ENCODE measurements at regions of chr17 and their contacts with region 1.

Region 1: DNA sequence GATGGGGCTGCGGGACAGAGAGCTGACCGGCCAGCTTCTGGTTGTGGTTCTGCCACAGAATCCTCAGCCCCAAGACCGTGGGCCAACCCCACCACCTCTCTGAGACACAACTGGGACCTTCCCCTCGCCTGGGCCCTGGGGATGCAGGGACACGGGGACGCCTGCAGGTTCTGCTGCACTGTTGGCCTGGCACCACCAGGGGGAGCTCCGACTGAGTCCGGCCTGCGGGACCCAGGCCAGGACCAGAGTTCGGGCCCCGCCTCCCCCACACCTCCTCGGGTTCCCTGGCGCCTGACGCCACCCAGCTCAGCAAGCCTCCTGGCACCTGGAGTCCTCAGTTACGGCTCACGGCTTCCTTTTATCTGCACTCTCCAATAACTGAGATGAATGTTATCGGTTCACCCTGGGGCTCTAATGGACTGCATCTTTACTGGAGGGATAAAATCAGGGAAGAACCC is 27.3 kb downstream of the TBC1D16 start:
- DNase-seq: peak; percentile 98
- H3K4me3 ChIP-seq: no peak overlapping the region; a peak in 1 of 4 replicates
- H3K27ac ChIP-seq: no peak overlapping the region
- H3K4me1 ChIP-seq: peaks cover 0 to 5% of the 10 kb centered on the region in 2 experiments; a peak in 1 of 4 replicates
- H3K27me3 ChIP-seq: no peaks in the 10 kb centered on the region
- CTCF ChIP-seq: peak; percentile 98
- EP300 ChIP-seq: no peak
- RAD21 ChIP-seq: peak; percentile 66

Region 2: GRCh38 chr17:79810130-79811010 is 198.0 kb before region 1 on chr17:
- CTCF ChIA-PET with region 1: interaction called, 20 read pairs
- POLR2A ChIA-PET with region 1: no interaction called
- DNase-seq: peak; percentile 97
- H3K4me3 ChIP-seq: peak overlapping the region; percentile 51 to 64
- H3K27ac ChIP-seq: peak overlapping the region in 1 of 2 experiments; percentile 90; a peak in 2 of 4 replicates
- H3K4me1 ChIP-seq: peaks cover 15 to 41% of the 10 kb centered on the region in 2 experiments
- H3K27me3 ChIP-seq: peaks cover 43% of the 10 kb centered on the region
- CTCF ChIP-seq: no peak
- EP300 ChIP-seq: no peak; a peak in 1 of 4 replicates
- RAD21 ChIP-seq: no peak

Region 3: DNA sequence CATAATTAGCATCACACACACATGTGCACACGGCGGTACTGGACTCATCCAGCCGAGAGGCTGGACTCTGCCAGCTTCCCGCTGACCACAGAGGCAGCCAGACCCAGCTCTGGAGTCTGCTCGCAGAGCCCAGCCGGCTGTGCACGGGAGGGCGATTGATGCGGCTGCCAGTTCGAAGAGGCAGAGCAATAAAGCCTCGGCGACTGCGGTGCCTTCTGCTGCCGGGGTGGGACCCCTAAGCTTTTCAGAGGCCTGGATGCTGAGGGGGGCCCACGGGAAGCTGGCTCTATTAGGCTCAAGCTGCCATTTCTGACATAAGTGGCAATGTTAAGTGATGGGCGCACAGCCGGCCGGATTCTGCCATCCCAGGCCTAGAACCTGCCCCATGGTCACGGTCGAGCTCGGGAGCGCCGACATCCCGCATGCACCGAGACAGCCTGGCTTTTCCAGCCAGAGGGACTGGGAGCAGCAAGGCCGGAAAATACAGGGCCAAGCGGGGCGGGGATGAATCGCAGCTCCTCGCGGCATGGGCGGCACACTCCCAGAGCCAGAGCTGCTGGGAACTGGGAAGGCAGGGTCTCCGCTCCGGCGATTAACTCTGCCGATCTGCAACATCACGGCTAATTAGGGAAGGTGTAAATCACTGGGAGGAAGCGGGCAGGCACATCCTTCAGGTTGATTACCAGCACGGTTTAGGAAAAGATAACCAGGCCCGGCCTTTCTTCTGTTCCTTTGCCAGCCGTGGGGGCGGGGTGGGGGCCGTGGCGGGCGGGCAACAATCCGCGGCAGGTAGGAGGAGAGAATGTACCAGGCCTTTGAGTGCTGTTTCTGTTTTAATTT is 30.5 kb before region 1 on chr17:
- CTCF ChIA-PET with region 1: interaction called, 22 read pairs
- POLR2A ChIA-PET with region 1: no interaction called
- DNase-seq: peak; percentile 26
- H3K4me3 ChIP-seq: no peak overlapping the region
- H3K27ac ChIP-seq: no peak overlapping the region
- H3K4me1 ChIP-seq: peaks cover 0 to 20% of the 10 kb centered on the region in 2 experiments; a peak in 1 of 4 replicates
- H3K27me3 ChIP-seq: no peaks in the 10 kb centered on the region
- CTCF ChIP-seq: no peak
- EP300 ChIP-seq: no peak
- RAD21 ChIP-seq: no peak

Region 4: GRCh38 chr17:80023481-80024205 is 15.2 kb after region 1 on chr17:
- CTCF ChIA-PET with region 1: interaction called, 72 read pairs
- POLR2A ChIA-PET with region 1: no interaction called
- DNase-seq: peak; percentile 61
- H3K4me3 ChIP-seq: no peak overlapping the region
- H3K27ac ChIP-seq: no peak overlapping the region
- H3K4me1 ChIP-seq: peaks cover 0 to 2% of the 10 kb centered on the region in 2 experiments; a peak in 1 of 4 replicates
- H3K27me3 ChIP-seq: no peaks in the 10 kb centered on the region
- CTCF ChIP-seq: no peak
- EP300 ChIP-seq: no peak
- RAD21 ChIP-seq: no peak

Region 5: DNA sequence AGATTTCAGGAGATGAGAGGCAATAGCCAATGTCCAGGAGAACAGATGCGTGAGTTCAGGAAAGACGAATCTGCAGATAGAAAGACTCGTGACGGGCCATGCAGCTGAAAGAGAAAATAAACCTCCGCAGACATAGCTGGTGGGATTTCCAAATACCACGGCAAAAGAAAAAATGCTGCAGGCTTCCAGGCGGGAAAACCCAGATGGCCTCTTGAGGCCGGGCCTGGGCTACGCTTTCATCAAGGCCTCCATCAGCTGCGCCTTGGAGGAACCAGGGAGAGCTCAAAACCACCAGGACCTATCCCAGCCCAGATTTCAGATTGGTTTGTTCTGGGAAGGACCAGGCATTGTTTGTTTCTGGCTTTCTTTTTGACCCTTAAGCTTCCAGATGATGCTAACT is 44.7 kb after region 1 on chr17:
- CTCF ChIA-PET with region 1: interaction called, 28 read pairs
- POLR2A ChIA-PET with region 1: no interaction called
- DNase-seq: peak; percentile 54
- H3K4me3 ChIP-seq: no peak overlapping the region
- H3K27ac ChIP-seq: no peak overlapping the region
- H3K4me1 ChIP-seq: no peaks in the 10 kb centered on the region
- H3K27me3 ChIP-seq: no peaks in the 10 kb centered on the region
- CTCF ChIP-seq: no peak
- EP300 ChIP-seq: no peak
- RAD21 ChIP-seq: no peak

Measured in SK-N-SH (cell line).